ENCODE measurements at regions of chr12 and their contacts with region 1.

Region 1: GRCh38 chr12:91382081-91382543 is 199.5 kb upstream of the DCN start:
- DNase-seq: peak; percentile 82
- H3K4me3 ChIP-seq: peak overlapping the region; percentile 5 to 29
- H3K27ac ChIP-seq: peak overlapping the region; percentile 56 to 74
- H3K4me1 ChIP-seq: no peaks in the 10 kb centered on the region
- H3K27me3 ChIP-seq: no peaks in the 10 kb centered on the region
- CTCF ChIP-seq: peak; percentile 85 to 89 (median 87)
- POLR2A ChIP-seq: peak; percentile 12

Region 2: GRCh38 chr12:91261820-91262676 is 120.1 kb before region 1 on chr12:
- intact Hi-C with region 1: no loop called
- DNase-seq: no peak
- H3K4me3 ChIP-seq: no peak overlapping the region
- H3K27ac ChIP-seq: no peak overlapping the region
- H3K4me1 ChIP-seq: no peaks in the 10 kb centered on the region
- H3K27me3 ChIP-seq: no peaks in the 10 kb centered on the region
- CTCF ChIP-seq: no peak
- POLR2A ChIP-seq: no peak

Region 3: GRCh38 chr12:91577586-91578539 is 195.8 kb after region 1 on chr12:
- intact Hi-C with region 1: loop called (anchors 5 kb)
- DNase-seq: no peak
- H3K4me3 ChIP-seq: no peak overlapping the region
- H3K27ac ChIP-seq: no peak overlapping the region
- H3K4me1 ChIP-seq: no peaks in the 10 kb centered on the region
- H3K27me3 ChIP-seq: no peaks in the 10 kb centered on the region
- CTCF ChIP-seq: peak; percentile 28 to 74 (median 66)
- POLR2A ChIP-seq: no peak